Activated CD8-positive, alpha-beta T cell treated with anti-CD3 and anti-CD28 coated beads for 36 hours (primary cell): ENCODE measurements at regions of chr19 and their contacts with region 1.

Region 1: GRCh38 chr19:15869109-15869555 is 28.7 kb downstream of the CYP4F2 start:
- DNase-seq: peak; percentile 37
- ATAC-seq: peak; percentile 75
- H3K4me3 Mint-ChIP-seq: no peak overlapping the region
- H3K27ac Mint-ChIP-seq: no peak overlapping the region
- H3K4me1 Mint-ChIP-seq: peaks cover 8% of the 10 kb centered on the region
- H3K27me3 Mint-ChIP-seq: peaks cover 4% of the 10 kb centered on the region
- CTCF ChIP-seq: peak; percentile 24

Region 2: GRCh38 chr19:15631817-15632216 is 237.3 kb before region 1 on chr19:
- CTCF ChIA-PET with region 1: interaction called, 4 read pairs
- POLR2A ChIA-PET with region 1: no interaction called
- intact Hi-C with region 1: loop called (anchors 10 kb)
- DNase-seq: peak; percentile 9
- ATAC-seq: no peak
- H3K4me3 Mint-ChIP-seq: no peak overlapping the region
- H3K27ac Mint-ChIP-seq: no peak overlapping the region
- H3K4me1 Mint-ChIP-seq: peaks cover 2% of the 10 kb centered on the region
- H3K27me3 Mint-ChIP-seq: peaks cover 20% of the 10 kb centered on the region
- CTCF ChIP-seq: peak; percentile 36

Region 3: DNA sequence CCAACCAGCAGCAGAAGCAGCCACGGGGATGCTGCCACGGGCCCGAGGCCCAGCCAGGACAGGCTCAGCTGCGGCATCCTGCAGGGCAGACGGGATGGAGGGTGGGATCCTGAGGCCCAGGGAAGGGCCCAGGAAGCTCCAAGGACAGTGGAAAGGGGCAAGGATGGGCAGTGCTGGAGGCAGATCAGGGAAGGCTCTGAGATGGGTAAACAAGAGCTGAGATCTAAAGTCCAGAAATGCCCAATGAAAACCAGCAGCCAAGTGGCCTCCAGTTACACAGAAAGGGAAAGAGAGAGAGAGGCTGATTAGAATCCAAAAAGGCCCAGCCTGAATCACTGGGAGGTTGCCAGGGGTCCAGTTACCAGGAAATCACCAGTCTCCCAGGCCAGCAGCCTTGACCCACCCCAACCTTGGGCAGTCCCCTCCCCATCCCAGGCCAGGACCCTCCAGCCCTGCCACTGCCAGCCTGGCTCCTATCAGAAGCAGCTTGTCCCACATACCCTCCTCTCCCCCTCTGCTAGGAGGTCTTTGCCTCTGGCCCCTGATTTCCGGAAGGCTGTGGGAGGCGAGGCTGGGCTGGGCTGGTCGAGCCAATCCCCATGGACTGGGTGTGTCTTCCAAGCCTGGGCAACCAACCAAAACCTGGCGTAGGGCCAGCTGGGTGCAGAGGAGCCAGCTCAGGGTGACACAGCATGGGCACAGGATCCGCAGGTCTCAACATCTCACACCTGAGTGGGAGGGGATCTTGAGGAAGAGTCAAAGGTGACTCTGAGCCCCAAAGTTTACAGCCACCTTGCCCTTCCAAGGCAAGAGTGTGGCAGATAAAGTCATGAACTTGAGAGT is 65.4 kb after region 1 on chr19 and contains the start of gene CYP4F11:
- CTCF ChIA-PET with region 1: no interaction called
- POLR2A ChIA-PET with region 1: no interaction called
- intact Hi-C with region 1: no loop called
- DNase-seq: no peak
- ATAC-seq: no peak
- H3K4me3 Mint-ChIP-seq: no peak within 1 kb of the TSS
- H3K27ac Mint-ChIP-seq: no peak within 1 kb of the TSS
- H3K4me1 Mint-ChIP-seq: no peaks in the 10 kb centered on the region
- H3K27me3 Mint-ChIP-seq: peaks cover 24% of the 10 kb centered on the region
- CTCF ChIP-seq: no peak
- total RNA-seq, gene CYP4F11: not detected

Region 4: DNA sequence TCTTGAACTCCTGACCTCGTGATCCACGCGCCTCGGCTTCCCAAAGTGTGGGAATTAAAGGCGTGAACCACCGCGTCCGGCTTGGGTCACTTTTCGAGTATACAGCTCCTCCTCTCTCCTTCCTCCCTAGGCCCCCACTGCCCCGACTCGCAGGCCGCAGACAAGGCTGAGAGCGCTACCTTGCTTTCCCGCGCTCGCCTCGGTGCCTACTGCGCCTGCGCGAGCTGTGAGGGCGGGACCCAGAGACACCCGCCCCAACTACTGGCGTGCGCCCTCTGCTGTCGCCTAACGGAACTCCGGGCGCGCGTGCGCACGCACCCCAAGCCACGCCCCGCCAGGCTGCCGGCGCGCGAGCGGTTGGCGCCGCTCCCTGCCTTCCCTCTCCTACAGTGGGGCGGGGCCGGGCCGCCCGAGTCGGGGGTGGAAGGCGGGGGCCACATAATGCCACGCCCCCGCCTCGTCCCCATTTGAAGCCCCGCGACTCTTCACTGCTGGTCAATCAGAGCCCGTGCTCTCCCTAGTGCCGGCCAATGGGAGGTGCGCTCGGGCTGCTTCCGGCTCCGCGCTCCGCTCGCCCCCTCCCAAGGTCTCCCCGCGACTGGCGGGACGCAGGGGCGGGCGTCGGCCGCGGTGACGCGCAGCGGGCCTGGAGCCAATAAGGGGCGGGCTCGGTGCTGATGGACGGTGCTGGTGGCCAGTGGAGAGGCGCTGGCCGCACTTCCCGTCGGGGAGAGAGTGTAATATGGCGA is 242.2 kb after region 1 on chr19 and contains the start of gene RAB8A:
- CTCF ChIA-PET with region 1: no interaction called
- POLR2A ChIA-PET with region 1: no interaction called
- intact Hi-C with region 1: no loop called
- DNase-seq: peak; percentile 99
- ATAC-seq: peak; percentile 93
- H3K4me3 Mint-ChIP-seq: peak within 1 kb of the TSS; percentile 95
- H3K27ac Mint-ChIP-seq: peak within 1 kb of the TSS; percentile 98
- H3K4me1 Mint-ChIP-seq: peaks cover 35% of the 10 kb centered on the region
- H3K27me3 Mint-ChIP-seq: no peaks in the 10 kb centered on the region
- CTCF ChIP-seq: peak; percentile 92
- total RNA-seq, gene RAB8A: 123 to 128 TPM